CD14-positive monocyte (primary cell): ENCODE measurements at regions of chr1 and their contacts with region 1.

Region 1: GRCh38 chr1:18902523-18903290 is at the start of gene ALDH4A1:
- DNase-seq: peak; percentile 94 to 97 (median 95)
- H3K4me3 ChIP-seq: peak within 1 kb of the TSS; percentile 77 to 88 (median 78)
- H3K4me3 Mint-ChIP-seq: peak within 1 kb of the TSS; percentile 97 to 98
- H3K27ac ChIP-seq: peak within 1 kb of the TSS; percentile 71 to 88
- H3K27ac Mint-ChIP-seq: peak within 1 kb of the TSS; percentile 98 to 100 (median 99)
- H3K4me1 ChIP-seq: peaks cover 33 to 50% of the 10 kb centered on the region in 2 donors
- H3K4me1 Mint-ChIP-seq: peaks cover 55% of the 10 kb centered on the region
- H3K27me3 ChIP-seq: no peaks in the 10 kb centered on the region
- H3K27me3 Mint-ChIP-seq: peaks cover 0 to 1% (median 0%) of the 10 kb centered on the region in 3 donors
- CTCF ChIP-seq: no peak
- polyA plus RNA-seq, gene ALDH4A1: 4.8 to 7.8 (median 6.1) TPM

Region 2: GRCh38 chr1:18949686-18950400 is 47.1 kb after region 1 on chr1:
- intact Hi-C with region 1: loop called (anchors 2 to 5 kb)
- DNase-seq: peak; percentile 38 to 50 (median 46)
- H3K4me3 ChIP-seq: peak overlapping the region; percentile 55 to 79 (median 64)
- H3K4me3 Mint-ChIP-seq: peak overlapping the region; percentile 87 to 93
- H3K27ac ChIP-seq: peak overlapping the region; percentile 78 to 97
- H3K27ac Mint-ChIP-seq: peak overlapping the region; percentile 97 to 100 (median 99)
- H3K4me1 ChIP-seq: peaks cover 63 to 83% of the 10 kb centered on the region in 2 donors
- H3K4me1 Mint-ChIP-seq: peaks cover 86% of the 10 kb centered on the region
- H3K27me3 ChIP-seq: peaks cover 0 to 15% of the 10 kb centered on the region in 2 donors
- H3K27me3 Mint-ChIP-seq: peaks cover 8 to 15% (median 14%) of the 10 kb centered on the region in 3 donors
- CTCF ChIP-seq: peak; percentile 19

Region 3: GRCh38 chr1:18956369-18957135 is 53.8 kb after region 1 on chr1 and contains the start of gene IFFO2:
- intact Hi-C with region 1: loop called (anchors 2 to 5 kb)
- DNase-seq: peak; percentile 90 to 93 (median 92)
- H3K4me3 ChIP-seq: peak within 1 kb of the TSS; percentile 58 to 85 (median 81)
- H3K4me3 Mint-ChIP-seq: peak within 1 kb of the TSS; percentile 92 to 93
- H3K27ac ChIP-seq: peak within 1 kb of the TSS in 1 of 2 donors; percentile 41
- H3K27ac Mint-ChIP-seq: peak within 1 kb of the TSS in 5 of 7 donors; percentile 8 to 94 (median 71)
- H3K4me1 ChIP-seq: peaks cover 37 to 52% of the 10 kb centered on the region in 2 donors
- H3K4me1 Mint-ChIP-seq: peaks cover 52% of the 10 kb centered on the region
- H3K27me3 ChIP-seq: peaks cover 5 to 46% of the 10 kb centered on the region in 2 donors
- H3K27me3 Mint-ChIP-seq: peaks cover 40 to 56% (median 45%) of the 10 kb centered on the region in 3 donors
- CTCF ChIP-seq: no peak
- polyA plus RNA-seq, gene IFFO2: 0.78 to 17.5 (median 0.94) TPM

Region 4: DNA sequence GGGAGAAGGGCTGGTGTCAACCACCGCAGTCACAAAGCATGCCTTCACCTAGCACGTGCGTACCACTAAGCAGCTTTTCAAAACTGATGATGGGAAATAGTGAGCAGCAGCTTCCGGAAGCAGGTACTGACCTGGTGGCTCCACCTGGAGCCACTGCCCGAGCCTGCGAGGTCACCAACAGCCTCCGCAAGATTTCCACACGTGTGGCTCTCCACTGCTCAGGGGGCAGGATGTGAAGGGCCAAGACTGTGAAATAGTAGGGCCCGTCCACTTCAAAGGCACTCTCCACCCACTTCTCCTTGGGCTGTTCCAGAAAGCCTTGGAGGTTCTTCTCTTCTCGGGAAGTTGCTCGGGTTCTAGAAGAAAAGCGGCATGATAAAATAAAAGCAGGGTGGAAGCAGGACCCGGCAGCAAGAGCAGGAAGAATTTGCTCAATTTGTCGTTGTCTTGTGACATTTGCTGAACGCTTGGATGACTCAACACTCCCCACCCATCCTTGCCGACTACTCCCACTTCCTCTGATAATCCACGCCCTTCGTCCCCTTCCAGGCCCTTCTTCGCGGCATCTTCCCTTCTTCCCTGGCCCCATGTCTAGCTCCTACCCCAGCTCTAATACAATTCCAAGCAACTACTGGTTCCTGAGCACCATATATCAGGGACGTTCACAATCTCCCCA is 178.6 kb after region 1 on chr1:
- intact Hi-C with region 1: loop called (anchors 5 kb)
- DNase-seq: peak; percentile 79 to 90 (median 87)
- H3K4me3 ChIP-seq: peak overlapping the region; percentile 45 to 73 (median 45)
- H3K4me3 Mint-ChIP-seq: peak overlapping the region; percentile 75 to 90
- H3K27ac ChIP-seq: peak overlapping the region; percentile 88
- H3K27ac Mint-ChIP-seq: peak overlapping the region; percentile 91 to 97 (median 96)
- H3K4me1 ChIP-seq: peaks cover 36 to 42% of the 10 kb centered on the region in 2 donors
- H3K4me1 Mint-ChIP-seq: peaks cover 43% of the 10 kb centered on the region
- H3K27me3 ChIP-seq: no peaks in the 10 kb centered on the region
- H3K27me3 Mint-ChIP-seq: peaks cover 0 to 5% (median 0%) of the 10 kb centered on the region in 3 donors
- CTCF ChIP-seq: no peak

Region 5: GRCh38 chr1:19209990-19210771 is 307.5 kb after region 1 on chr1 and contains the start of gene UBR4:
- intact Hi-C with region 1: loop called in 1 of 2 experiments (anchors 10 kb)
- DNase-seq: peak; percentile 94 to 97 (median 97)
- H3K4me3 ChIP-seq: peak within 1 kb of the TSS; percentile 83 to 98 (median 96)
- H3K4me3 Mint-ChIP-seq: peak within 1 kb of the TSS; percentile 93 to 99
- H3K27ac ChIP-seq: peak within 1 kb of the TSS; percentile 94 to 99
- H3K27ac Mint-ChIP-seq: peak within 1 kb of the TSS; percentile 99 to 100 (median 99)
- H3K4me1 ChIP-seq: peaks cover 23 to 40% of the 10 kb centered on the region in 2 donors
- H3K4me1 Mint-ChIP-seq: peaks cover 49% of the 10 kb centered on the region
- H3K27me3 ChIP-seq: no peaks in the 10 kb centered on the region
- H3K27me3 Mint-ChIP-seq: no peaks in the 10 kb centered on the region
- CTCF ChIP-seq: no peak
- polyA plus RNA-seq, gene UBR4: 44.3 to 93.8 (median 49.4) TPM

Region 6: DNA sequence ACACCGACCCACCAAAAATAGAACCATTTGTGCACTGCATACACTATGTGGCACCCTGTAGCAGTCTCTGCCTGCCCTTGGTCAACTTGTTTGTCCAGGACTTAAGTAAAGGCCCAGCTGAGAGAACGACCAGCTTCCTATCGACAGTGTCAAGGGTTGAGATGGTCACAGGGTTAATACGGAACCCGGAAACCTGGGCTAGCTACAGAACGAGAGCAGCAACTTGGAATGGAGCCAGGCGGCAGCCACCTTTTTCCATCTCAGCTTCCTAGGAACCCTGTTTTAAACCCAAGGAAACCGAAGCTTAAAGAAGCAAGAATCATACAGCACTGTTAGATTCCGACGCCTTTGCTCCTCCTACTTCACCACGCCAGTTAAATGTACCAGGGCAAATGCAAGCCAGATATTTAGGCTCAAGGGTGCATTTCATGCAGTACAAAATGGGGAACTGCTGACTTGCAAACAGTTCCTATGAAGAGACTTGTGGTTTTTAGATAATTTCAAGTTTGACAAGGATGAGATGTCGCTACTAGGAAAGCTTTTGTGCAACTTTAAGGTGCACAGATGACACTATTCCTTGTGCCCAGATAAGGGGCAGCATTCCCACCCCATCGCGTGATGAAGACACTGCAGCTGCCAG is 444.9 kb after region 1 on chr1:
- intact Hi-C with region 1: no loop called
- DNase-seq: peak; percentile 27 to 38 (median 34)
- H3K4me3 ChIP-seq: peak overlapping the region in 1 of 3 experiments; percentile 45
- H3K4me3 Mint-ChIP-seq: peak overlapping the region; percentile 51 to 81
- H3K27ac ChIP-seq: peak overlapping the region; percentile 3 to 64
- H3K27ac Mint-ChIP-seq: peak overlapping the region; percentile 35 to 88 (median 73)
- H3K4me1 ChIP-seq: peaks cover 35 to 45% of the 10 kb centered on the region in 2 donors
- H3K4me1 Mint-ChIP-seq: peaks cover 39% of the 10 kb centered on the region
- H3K27me3 ChIP-seq: no peaks in the 10 kb centered on the region
- H3K27me3 Mint-ChIP-seq: peaks cover 0 to 1% (median 0%) of the 10 kb centered on the region in 3 donors
- CTCF ChIP-seq: no peak